Panc1 (cell line): ENCODE measurements at regions of chr12 and their contacts with region 1.

Region 1: GRCh38 chr12:39103552-39104165 is 198.3 kb upstream of the CPNE8 start:
- DNase-seq: peak; percentile 61
- ATAC-seq: peak; percentile 97
- H3K4me3 ChIP-seq: no peak overlapping the region
- H3K27ac ChIP-seq: no peak overlapping the region
- H3K4me1 ChIP-seq: no peaks in the 10 kb centered on the region; the same call in 1 of the 2 replicates
- H3K27me3 ChIP-seq: 0 out of 2 replicates have a peak, but pooled peaks cover under 1% of the 10 kb centered on the region
- CTCF ChIP-seq: peak; percentile 79

Region 2: DNA sequence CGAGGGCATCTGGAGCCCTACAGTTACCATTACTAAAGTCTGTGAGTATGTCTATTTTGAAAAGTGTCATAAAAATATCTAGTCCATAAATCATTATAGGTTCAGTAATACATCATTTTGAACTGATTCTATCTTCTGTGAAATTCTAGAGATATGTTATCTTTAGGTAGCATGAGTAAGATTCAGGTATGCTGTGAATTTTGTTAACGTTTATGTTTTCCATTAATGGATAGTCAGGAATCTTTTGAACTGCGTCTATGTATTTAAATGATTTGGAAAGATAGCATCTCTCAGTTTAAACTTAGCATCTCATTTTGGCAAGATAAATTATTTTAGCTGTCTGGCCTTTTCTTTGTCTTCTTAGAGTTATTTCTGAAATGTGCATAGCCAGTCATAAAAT is 778.8 kb before region 1 on chr12:
- CTCF ChIA-PET with region 1: no interaction called
- POLR2A ChIA-PET with region 1: no interaction called
- in situ Hi-C with region 1: no loop called
- intact Hi-C with region 1: loop called (anchors 5 kb)
- DNase-seq: no peak
- ATAC-seq: no peak
- H3K4me3 ChIP-seq: no peak overlapping the region
- H3K27ac ChIP-seq: no peak overlapping the region
- H3K4me1 ChIP-seq: no peaks in the 10 kb centered on the region
- H3K27me3 ChIP-seq: no peaks in the 10 kb centered on the region
- CTCF ChIP-seq: no peak

Region 3: DNA sequence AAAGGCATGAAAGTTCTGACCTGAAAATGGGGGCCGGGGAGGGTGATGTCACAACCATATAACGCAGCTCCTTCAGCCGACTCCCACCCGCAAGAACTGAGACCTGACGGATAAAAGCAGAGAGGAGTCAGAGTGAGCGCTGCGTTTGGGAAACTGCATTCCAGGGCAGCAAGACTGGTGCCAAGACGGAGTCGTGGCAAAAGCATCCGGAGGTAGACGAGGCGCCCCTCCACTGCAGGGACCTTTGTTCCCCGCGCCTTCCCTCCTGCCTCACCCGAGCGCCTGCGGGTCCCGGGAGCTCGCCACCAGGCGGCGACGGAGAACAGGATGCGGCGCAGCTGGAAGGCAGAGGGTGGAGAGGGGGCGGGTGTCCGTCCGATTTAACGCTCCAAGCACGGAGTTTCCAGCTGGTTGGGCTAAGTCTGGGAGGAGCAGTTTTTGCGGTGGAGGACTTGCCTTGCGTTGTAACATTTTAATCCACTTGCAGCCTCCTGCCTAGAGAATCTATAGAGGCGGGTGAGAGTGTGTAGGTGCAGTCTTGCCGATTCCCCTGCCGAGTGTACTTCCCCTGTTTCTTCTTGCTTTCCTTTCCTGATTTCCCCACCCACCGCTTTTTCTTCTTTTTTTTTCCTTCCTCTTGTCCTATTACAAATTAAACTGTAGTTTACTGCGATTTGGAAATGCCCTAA is 197.0 kb before region 1 on chr12:
- CTCF ChIA-PET with region 1: interaction called, 3 read pairs
- POLR2A ChIA-PET with region 1: no interaction called
- in situ Hi-C with region 1: no loop called
- intact Hi-C with region 1: loop called (anchors 1 kb)
- DNase-seq: peak; percentile 69
- ATAC-seq: peak; percentile 84
- H3K4me3 ChIP-seq: peak overlapping the region; percentile 79 to 92
- H3K27ac ChIP-seq: peak overlapping the region; percentile 94
- H3K4me1 ChIP-seq: peaks cover 16% of the 10 kb centered on the region
- H3K27me3 ChIP-seq: no peaks in the 10 kb centered on the region
- CTCF ChIP-seq: peak; percentile 96

Region 4: DNA sequence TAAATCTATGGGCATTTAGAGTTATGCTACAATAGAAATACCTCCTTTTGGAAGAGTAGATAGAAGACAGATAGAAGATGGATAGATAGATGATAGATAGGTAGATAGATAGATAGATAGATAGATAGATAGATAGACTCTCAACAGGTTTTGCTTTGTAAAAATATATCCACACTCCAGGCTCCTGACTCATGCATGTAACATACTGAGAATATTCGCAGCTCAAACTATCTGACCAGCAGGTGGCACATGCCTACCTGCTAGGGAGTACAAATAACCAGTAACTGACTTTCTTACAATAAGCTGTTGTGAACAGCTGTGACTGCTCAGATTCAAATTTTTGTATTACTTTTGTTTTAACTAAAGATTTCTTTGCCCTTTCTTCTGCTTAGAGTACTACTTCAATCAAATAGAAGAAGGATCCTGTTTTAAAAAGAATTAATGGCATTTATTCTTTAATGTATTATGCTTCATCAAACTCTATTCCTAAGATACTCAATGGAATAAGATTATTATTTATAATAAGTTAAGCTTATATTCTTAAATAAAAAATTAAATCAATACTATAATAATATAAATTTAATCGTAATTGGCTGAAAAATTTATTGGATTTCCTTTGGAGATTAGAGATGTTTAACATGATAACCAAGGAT is 182.5 kb before region 1 on chr12:
- CTCF ChIA-PET with region 1: interaction called, 14 read pairs
- POLR2A ChIA-PET with region 1: no interaction called
- in situ Hi-C with region 1: no loop called
- intact Hi-C with region 1: loop called (anchors 2 kb)
- DNase-seq: peak; percentile 54
- ATAC-seq: peak; percentile 92
- H3K4me3 ChIP-seq: no peak overlapping the region
- H3K27ac ChIP-seq: no peak overlapping the region
- H3K4me1 ChIP-seq: no peaks in the 10 kb centered on the region
- H3K27me3 ChIP-seq: no peaks in the 10 kb centered on the region
- CTCF ChIP-seq: peak; percentile 74; the same call in 1 of the 2 replicates

Region 5: GRCh38 chr12:39127401-39127800 is 23.7 kb after region 1 on chr12:
- CTCF ChIA-PET with region 1: no interaction called
- POLR2A ChIA-PET with region 1: no interaction called
- in situ Hi-C with region 1: no loop called
- intact Hi-C with region 1: no loop called
- DNase-seq: peak; percentile 75
- ATAC-seq: 0 out of 2 replicates have a peak, but pooled peaks have one; percentile 68
- H3K4me3 ChIP-seq: no peak overlapping the region
- H3K27ac ChIP-seq: no peak overlapping the region
- H3K4me1 ChIP-seq: no peaks in the 10 kb centered on the region
- H3K27me3 ChIP-seq: no peaks in the 10 kb centered on the region
- CTCF ChIP-seq: no peak

Region 6: GRCh38 chr12:39145175-39145999 is 41.7 kb after region 1 on chr12:
- CTCF ChIA-PET with region 1: no interaction called
- POLR2A ChIA-PET with region 1: no interaction called
- in situ Hi-C with region 1: no loop called
- intact Hi-C with region 1: no loop called
- DNase-seq: no peak
- ATAC-seq: no peak
- H3K4me3 ChIP-seq: no peak overlapping the region
- H3K27ac ChIP-seq: no peak overlapping the region
- H3K4me1 ChIP-seq: no peaks in the 10 kb centered on the region
- H3K27me3 ChIP-seq: no peaks in the 10 kb centered on the region
- CTCF ChIP-seq: peak; percentile 27

Region 7: GRCh38 chr12:39199351-39199750 is 95.7 kb after region 1 on chr12:
- CTCF ChIA-PET with region 1: no interaction called
- POLR2A ChIA-PET with region 1: no interaction called
- in situ Hi-C with region 1: no loop called
- intact Hi-C with region 1: no loop called
- DNase-seq: no peak
- ATAC-seq: no peak
- H3K4me3 ChIP-seq: no peak overlapping the region
- H3K27ac ChIP-seq: no peak overlapping the region
- H3K4me1 ChIP-seq: no peaks in the 10 kb centered on the region
- H3K27me3 ChIP-seq: no peaks in the 10 kb centered on the region
- CTCF ChIP-seq: no peak

Region 8: GRCh38 chr12:39252628-39253027 is 149.0 kb after region 1 on chr12:
- CTCF ChIA-PET with region 1: no interaction called
- POLR2A ChIA-PET with region 1: no interaction called
- in situ Hi-C with region 1: no loop called
- intact Hi-C with region 1: loop called (anchors 10 kb)
- DNase-seq: no peak
- ATAC-seq: no peak
- H3K4me3 ChIP-seq: no peak overlapping the region
- H3K27ac ChIP-seq: no peak overlapping the region
- H3K4me1 ChIP-seq: no peaks in the 10 kb centered on the region
- H3K27me3 ChIP-seq: no peaks in the 10 kb centered on the region
- CTCF ChIP-seq: no peak

Region 9: DNA sequence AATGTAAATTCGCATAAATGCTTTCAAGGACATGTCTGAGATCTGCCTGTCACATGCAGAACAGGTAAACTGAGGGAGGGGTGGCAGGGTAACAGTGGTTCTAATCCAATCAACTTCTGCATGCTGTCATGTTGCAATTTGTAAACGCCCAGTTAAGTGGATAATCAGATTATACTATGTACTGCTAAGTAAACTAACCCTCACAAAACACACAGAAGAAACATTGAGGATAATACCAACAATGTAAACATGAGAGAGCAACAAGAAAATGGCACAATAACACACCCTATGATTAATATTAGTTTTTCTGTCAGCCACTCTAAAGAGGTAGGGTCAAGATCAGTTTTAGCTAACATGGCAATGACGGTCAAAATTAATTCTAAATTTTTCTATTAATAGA is 215.5 kb after region 1 on chr12:
- CTCF ChIA-PET with region 1: no interaction called
- POLR2A ChIA-PET with region 1: no interaction called
- in situ Hi-C with region 1: no loop called
- intact Hi-C with region 1: no loop called
- DNase-seq: no peak
- ATAC-seq: no peak
- H3K4me3 ChIP-seq: no peak overlapping the region
- H3K27ac ChIP-seq: no peak overlapping the region
- H3K4me1 ChIP-seq: no peaks in the 10 kb centered on the region
- H3K27me3 ChIP-seq: no peaks in the 10 kb centered on the region
- CTCF ChIP-seq: no peak